ENCODE measurements at regions of chr1 and their contacts with region 1.

Region 1: DNA sequence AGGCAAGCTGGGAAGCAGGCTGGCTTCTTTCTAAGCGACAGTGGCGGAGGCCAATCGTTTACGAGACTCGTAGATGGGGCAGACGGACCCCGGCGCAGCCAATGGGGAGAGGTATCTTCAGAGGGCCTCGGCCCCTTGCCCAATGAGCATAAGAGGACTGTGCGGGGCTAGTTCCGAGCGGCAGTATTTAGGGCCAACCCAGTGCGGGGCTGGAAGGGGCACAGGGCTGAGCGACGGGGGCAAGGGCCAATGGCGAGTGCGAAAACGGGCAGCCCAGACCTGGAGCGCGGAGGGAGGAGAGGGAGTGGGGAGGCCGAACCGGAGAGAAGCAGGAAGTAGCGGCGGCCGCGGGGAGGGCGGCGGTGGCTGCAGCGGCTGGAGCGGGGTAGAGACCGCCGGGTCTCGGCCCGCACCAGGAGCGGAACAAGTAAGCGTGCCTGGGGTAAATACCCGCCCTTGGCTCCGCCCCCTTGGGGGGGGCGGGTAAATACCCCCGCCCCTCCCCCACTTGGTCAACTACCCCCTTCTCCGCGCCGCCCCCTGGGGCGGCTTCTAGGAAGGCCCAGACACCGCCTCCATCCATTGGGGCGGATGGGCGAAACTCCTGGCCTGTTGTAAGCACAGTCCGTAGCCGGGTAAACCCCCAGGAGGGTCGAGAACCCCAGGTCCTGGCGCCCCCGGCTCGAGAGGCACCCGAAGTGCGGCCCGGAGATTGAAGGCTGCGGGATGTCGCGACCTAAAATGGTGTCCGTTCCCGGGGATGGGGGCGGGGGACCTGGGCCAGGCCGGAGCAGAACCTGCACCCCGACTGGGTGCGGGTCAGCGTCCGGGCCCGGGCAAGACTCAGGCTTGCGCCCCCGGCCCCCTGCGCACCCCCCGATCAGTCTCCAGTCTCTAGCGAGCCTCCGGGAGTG is at the start of gene ZNF687:
- DNase-seq: peak; percentile 93 to 99 (median 99)
- ATAC-seq: peak; percentile 91
- H3K4me3 ChIP-seq: peak within 1 kb of the TSS; percentile 96
- H3K4me3 Mint-ChIP-seq: peak within 1 kb of the TSS; percentile 93 to 100 (median 97)
- H3K27ac ChIP-seq: peak within 1 kb of the TSS; percentile 87
- H3K27ac Mint-ChIP-seq: peak within 1 kb of the TSS; percentile 92 to 100 (median 96)
- H3K4me1 ChIP-seq: peaks cover 10 to 11% of the 10 kb centered on the region in 2 donors
- H3K4me1 Mint-ChIP-seq: peaks cover 20 to 42% (median 27%) of the 10 kb centered on the region in 7 donors
- H3K27me3 ChIP-seq: no peaks in the 10 kb centered on the region
- H3K27me3 Mint-ChIP-seq: no peaks in the 10 kb centered on the region
- total RNA-seq, gene ZNF687: 30.4 to 38.1 (median 32.3) TPM

Region 2: GRCh38 chr1:151059078-151059907 is 222.9 kb before region 1 on chr1 and contains the start of gene CDC42SE1:
- CTCF ChIA-PET with region 1: no interaction called
- POLR2A ChIA-PET with region 1: interaction called, 5 read pairs
- intact Hi-C with region 1: loop called in 1 of 2 experiments (anchors 5 kb)
- DNase-seq: peak; percentile 76 to 85 (median 82)
- ATAC-seq: peak; percentile 84
- H3K4me3 ChIP-seq: peak within 1 kb of the TSS; percentile 82
- H3K4me3 Mint-ChIP-seq: peak within 1 kb of the TSS; percentile 95 to 100 (median 99)
- H3K27ac ChIP-seq: peak within 1 kb of the TSS; percentile 99
- H3K27ac Mint-ChIP-seq: peak within 1 kb of the TSS; percentile 93 to 99 (median 95)
- H3K4me1 ChIP-seq: peaks cover 11 to 26% of the 10 kb centered on the region in 2 donors
- H3K4me1 Mint-ChIP-seq: peaks cover 35 to 55% (median 41%) of the 10 kb centered on the region in 7 donors
- H3K27me3 ChIP-seq: no peaks in the 10 kb centered on the region
- H3K27me3 Mint-ChIP-seq: no peaks in the 10 kb centered on the region
- total RNA-seq, gene CDC42SE1: 362 to 516 (median 425) TPM

Region 3: GRCh38 chr1:151165738-151166505 is 116.3 kb before region 1 on chr1 and contains the starts of genes LYSMD1 and SCNM1:
- CTCF ChIA-PET with region 1: no interaction called
- POLR2A ChIA-PET with region 1: interaction called, 5 read pairs
- intact Hi-C with region 1: loop called in 1 of 2 experiments (anchors 1 kb)
- DNase-seq: peak; percentile 78 to 98 (median 97)
- ATAC-seq: peak; percentile 98
- H3K4me3 ChIP-seq: peak within 1 kb of the TSS; percentile 97
- H3K4me3 Mint-ChIP-seq: peak within 1 kb of the TSS; percentile 87 to 99 (median 95)
- H3K27ac ChIP-seq: peak within 1 kb of the TSS; percentile 71
- H3K27ac Mint-ChIP-seq: peak within 1 kb of the TSS; percentile 90 to 99 (median 97)
- H3K4me1 ChIP-seq: peaks cover 18 to 19% of the 10 kb centered on the region in 2 donors
- H3K4me1 Mint-ChIP-seq: peaks cover 30 to 70% (median 52%) of the 10 kb centered on the region in 7 donors
- H3K27me3 ChIP-seq: no peaks in the 10 kb centered on the region
- H3K27me3 Mint-ChIP-seq: peaks cover 0 to 3% (median 0%) of the 10 kb centered on the region in 5 donors
- total RNA-seq, gene LYSMD1: 1.4 to 3.3 (median 2.3) TPM
- total RNA-seq, gene SCNM1: 37.1 to 73.1 (median 57.1) TPM

Region 4: GRCh38 chr1:151198255-151199127 is 83.7 kb before region 1 on chr1 and contains the start of gene PIP5K1A:
- CTCF ChIA-PET with region 1: no interaction called
- POLR2A ChIA-PET with region 1: interaction called, 4 read pairs
- intact Hi-C with region 1: loop called (anchors 1 kb)
- DNase-seq: peak; percentile 96 to 99 (median 97)
- ATAC-seq: peak; percentile 98
- H3K4me3 ChIP-seq: peak within 1 kb of the TSS; percentile 83
- H3K4me3 Mint-ChIP-seq: peak within 1 kb of the TSS; percentile 93 to 100 (median 98)
- H3K27ac ChIP-seq: peak within 1 kb of the TSS; percentile 88
- H3K27ac Mint-ChIP-seq: peak within 1 kb of the TSS; percentile 95 to 99 (median 98)
- H3K4me1 ChIP-seq: peaks cover 11% of the 10 kb centered on the region in 2 donors
- H3K4me1 Mint-ChIP-seq: peaks cover 31 to 56% (median 46%) of the 10 kb centered on the region in 7 donors
- H3K27me3 ChIP-seq: no peaks in the 10 kb centered on the region
- H3K27me3 Mint-ChIP-seq: peaks cover 0 to 12% (median 0%) of the 10 kb centered on the region in 5 donors
- total RNA-seq, gene PIP5K1A: 56.9 to 76.5 (median 59.5) TPM

Region 5: DNA sequence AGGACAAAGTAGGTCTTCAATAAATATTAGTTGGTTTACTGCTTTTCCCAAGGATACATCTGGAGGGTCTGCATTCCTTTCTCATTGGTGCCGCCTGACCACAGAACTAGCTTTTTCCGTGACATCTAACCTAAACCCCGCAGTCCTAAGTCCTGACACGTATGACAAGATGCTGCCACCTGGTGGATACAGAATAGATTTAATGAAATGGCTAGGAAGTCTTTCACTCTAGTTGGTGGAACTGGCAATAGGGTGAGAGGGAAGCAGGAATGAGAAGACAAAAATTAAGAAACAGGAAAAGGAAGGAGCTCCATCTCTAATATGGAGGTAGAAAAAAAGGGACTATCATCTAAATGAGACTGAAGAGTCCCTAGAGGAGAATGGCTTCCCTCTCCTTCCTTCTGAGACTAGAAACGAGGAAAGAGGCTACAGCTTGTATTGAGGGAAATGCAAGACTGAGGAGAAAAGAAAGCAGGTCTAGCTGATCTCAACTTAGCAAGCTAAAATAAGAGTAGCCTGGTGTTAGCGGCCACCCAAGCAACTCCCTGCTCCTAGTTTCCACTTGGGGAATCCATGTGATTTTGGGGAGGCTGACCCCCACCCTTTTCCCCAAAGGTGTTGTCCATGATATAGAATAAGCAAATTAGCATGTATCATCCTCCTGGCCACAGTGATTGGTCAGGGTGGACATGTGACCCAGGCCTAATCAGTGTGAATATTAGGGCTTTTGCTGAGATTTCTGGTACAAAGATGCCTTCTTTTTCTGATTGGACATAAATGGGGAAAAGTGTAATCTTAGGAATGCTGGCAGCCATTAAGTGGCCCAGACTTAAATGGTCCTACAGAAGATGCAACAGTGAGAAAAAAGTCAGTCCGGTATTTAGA is 58.9 kb after region 1 on chr1:
- CTCF ChIA-PET with region 1: interaction called, 17 read pairs
- POLR2A ChIA-PET with region 1: interaction called, 10 read pairs
- intact Hi-C with region 1: loop called in 1 of 2 experiments (anchors 1 kb)
- DNase-seq: peak in 8 of 9 donors; percentile 46 to 75 (median 68)
- ATAC-seq: peak; percentile 92
- H3K4me3 ChIP-seq: no peak overlapping the region
- H3K4me3 Mint-ChIP-seq: peak overlapping the region in 1 of 10 donors; percentile 22
- H3K27ac ChIP-seq: peak overlapping the region; percentile 5
- H3K27ac Mint-ChIP-seq: peak overlapping the region; percentile 1 to 70 (median 52)
- H3K4me1 ChIP-seq: peaks cover 6 to 7% of the 10 kb centered on the region in 2 donors
- H3K4me1 Mint-ChIP-seq: peaks cover 20 to 39% (median 28%) of the 10 kb centered on the region in 7 donors
- H3K27me3 ChIP-seq: no peaks in the 10 kb centered on the region
- H3K27me3 Mint-ChIP-seq: no peaks in the 10 kb centered on the region

Region 6: GRCh38 chr1:151399890-151400495 is 117.8 kb after region 1 on chr1:
- CTCF ChIA-PET with region 1: no interaction called
- POLR2A ChIA-PET with region 1: interaction called, 5 read pairs
- intact Hi-C with region 1: loop called (anchors 1 kb)
- DNase-seq: peak in 3 of 9 donors; percentile 2 to 10 (median 10)
- ATAC-seq: peak; percentile 15
- H3K4me3 ChIP-seq: peak overlapping the region; percentile 95
- H3K4me3 Mint-ChIP-seq: peak overlapping the region; percentile 84 to 99 (median 94)
- H3K27ac ChIP-seq: peak overlapping the region; percentile 98
- H3K27ac Mint-ChIP-seq: peak overlapping the region; percentile 94 to 99 (median 98)
- H3K4me1 ChIP-seq: peaks cover 13 to 14% of the 10 kb centered on the region in 2 donors
- H3K4me1 Mint-ChIP-seq: peaks cover 11 to 34% (median 28%) of the 10 kb centered on the region in 7 donors
- H3K27me3 ChIP-seq: no peaks in the 10 kb centered on the region
- H3K27me3 Mint-ChIP-seq: peaks cover 0 to 12% (median 0%) of the 10 kb centered on the region in 5 donors

Region 7: DNA sequence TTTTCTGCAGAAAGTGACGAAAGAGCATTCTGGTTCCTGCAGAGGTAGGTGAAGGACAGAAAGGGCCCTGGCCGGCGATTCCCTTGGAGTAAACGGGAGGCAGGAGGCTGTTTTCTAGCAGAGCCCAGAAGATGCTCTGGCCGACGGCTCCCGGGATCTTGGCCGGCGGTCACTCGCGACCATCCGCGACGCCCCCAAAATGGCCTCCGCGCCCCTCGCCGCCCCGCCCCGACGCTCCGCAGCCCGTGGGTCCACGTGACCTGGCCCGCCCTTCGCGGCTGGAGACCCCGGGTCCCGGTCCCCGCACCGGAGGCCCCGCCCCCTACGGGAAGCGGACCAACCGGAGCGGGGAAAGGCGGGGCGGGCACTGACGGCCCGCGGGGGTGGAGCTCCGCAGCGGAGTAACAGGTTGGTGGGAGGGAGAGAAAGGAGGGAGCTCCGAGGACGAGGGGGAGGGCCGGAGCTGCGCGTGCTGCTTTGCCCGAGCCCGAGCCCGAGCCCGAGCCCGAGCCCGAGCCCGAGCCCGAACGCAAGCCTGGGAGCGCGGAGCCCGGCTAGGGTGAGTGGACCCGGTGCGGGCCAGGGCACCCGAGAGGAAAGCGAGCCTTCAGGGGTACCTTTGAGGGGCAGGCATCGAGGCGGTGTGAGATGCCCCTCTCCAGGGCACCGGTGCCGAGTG is 228.9 kb after region 1 on chr1 and contains the start of gene CGN:
- CTCF ChIA-PET with region 1: no interaction called
- POLR2A ChIA-PET with region 1: no interaction called
- intact Hi-C with region 1: loop called in 1 of 2 experiments (anchors 10 kb)
- DNase-seq: peak; percentile 72 to 90 (median 84)
- ATAC-seq: peak; percentile 99
- H3K4me3 ChIP-seq: peak within 1 kb of the TSS; percentile 89
- H3K4me3 Mint-ChIP-seq: peak within 1 kb of the TSS; percentile 90 to 99 (median 94)
- H3K27ac ChIP-seq: peak within 1 kb of the TSS; percentile 65
- H3K27ac Mint-ChIP-seq: peak within 1 kb of the TSS; percentile 38 to 93 (median 86)
- H3K4me1 ChIP-seq: peaks cover 13 to 18% of the 10 kb centered on the region in 2 donors
- H3K4me1 Mint-ChIP-seq: peaks cover 12 to 36% (median 25%) of the 10 kb centered on the region in 7 donors
- H3K27me3 ChIP-seq: no peaks in the 10 kb centered on the region
- H3K27me3 Mint-ChIP-seq: peaks cover 0 to 38% (median 0%) of the 10 kb centered on the region in 5 donors
- total RNA-seq, gene CGN: 0.29 to 2.4 (median 1.3) TPM in 4 of 5 experiments, not detected in the other

Measured in naive thymus-derived CD4-positive, alpha-beta T cell (primary cell).